ENCODE measurements at regions of chr3 and their contacts with region 1.

Region 1: GRCh38 chr3:30934208-30934550 is 39.7 kb upstream of the GADL1 start:
- DNase-seq: peak; percentile 68
- ATAC-seq: peak; percentile 95
- H3K4me3 ChIP-seq: peak overlapping the region; percentile 10; the same call in 1 of the 2 replicates
- H3K27ac ChIP-seq: no peak overlapping the region
- H3K4me1 ChIP-seq: no peaks in the 10 kb centered on the region
- H3K27me3 ChIP-seq: no peaks in the 10 kb centered on the region
- CTCF ChIP-seq: peak; percentile 79

Region 2: DNA sequence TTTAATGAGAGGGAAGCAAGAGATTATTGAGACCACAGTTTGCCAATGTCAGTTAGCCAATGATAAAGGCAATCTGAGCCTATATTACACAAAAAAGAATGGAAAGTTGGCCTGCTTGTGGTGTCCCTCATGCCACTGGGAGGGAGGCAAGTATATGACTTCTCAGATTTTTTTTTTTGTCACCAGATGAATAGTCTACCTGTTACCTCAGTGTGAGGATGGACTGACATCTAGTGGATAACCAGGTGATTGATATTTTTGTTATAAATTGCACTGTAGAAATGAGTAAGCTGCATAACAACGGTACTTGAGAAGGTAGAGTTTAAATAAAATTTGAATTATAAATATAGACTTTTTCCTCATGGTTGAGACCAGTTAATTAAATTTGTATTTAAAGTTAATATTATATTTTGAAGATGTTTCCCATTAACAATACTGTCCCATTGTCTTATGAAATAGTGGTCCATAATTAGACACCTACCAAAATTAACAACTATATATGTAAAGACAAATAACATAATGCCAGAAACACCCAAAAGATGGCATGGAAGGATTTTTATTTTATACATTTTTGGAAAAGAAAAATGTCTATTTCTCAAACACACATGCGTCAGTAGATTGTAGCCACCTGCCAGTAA is 198.1 kb after region 1 on chr3:
- CTCF ChIA-PET with region 1: interaction called, 4 read pairs
- POLR2A ChIA-PET with region 1: no interaction called
- intact Hi-C with region 1: loop called (anchors 1 kb)
- DNase-seq: peak; percentile 76
- ATAC-seq: peak; percentile 64
- H3K4me3 ChIP-seq: no peak overlapping the region
- H3K27ac ChIP-seq: no peak overlapping the region
- H3K4me1 ChIP-seq: no peaks in the 10 kb centered on the region
- H3K27me3 ChIP-seq: no peaks in the 10 kb centered on the region
- CTCF ChIP-seq: peak; percentile 91

Region 3: GRCh38 chr3:31448035-31448881 is 514.1 kb after region 1 on chr3:
- CTCF ChIA-PET with region 1: no interaction called
- POLR2A ChIA-PET with region 1: no interaction called
- intact Hi-C with region 1: loop called (anchors 5 kb)
- DNase-seq: peak; percentile 59
- ATAC-seq: peak; percentile 97
- H3K4me3 ChIP-seq: no peak overlapping the region
- H3K27ac ChIP-seq: no peak overlapping the region
- H3K4me1 ChIP-seq: peaks cover 27% of the 10 kb centered on the region
- H3K27me3 ChIP-seq: no peaks in the 10 kb centered on the region
- CTCF ChIP-seq: peak; percentile 87